Cardiac septum (tissue), 1 donor: ENCODE measurements at regions of chr15 and their contacts with region 1.

Region 1: DNA sequence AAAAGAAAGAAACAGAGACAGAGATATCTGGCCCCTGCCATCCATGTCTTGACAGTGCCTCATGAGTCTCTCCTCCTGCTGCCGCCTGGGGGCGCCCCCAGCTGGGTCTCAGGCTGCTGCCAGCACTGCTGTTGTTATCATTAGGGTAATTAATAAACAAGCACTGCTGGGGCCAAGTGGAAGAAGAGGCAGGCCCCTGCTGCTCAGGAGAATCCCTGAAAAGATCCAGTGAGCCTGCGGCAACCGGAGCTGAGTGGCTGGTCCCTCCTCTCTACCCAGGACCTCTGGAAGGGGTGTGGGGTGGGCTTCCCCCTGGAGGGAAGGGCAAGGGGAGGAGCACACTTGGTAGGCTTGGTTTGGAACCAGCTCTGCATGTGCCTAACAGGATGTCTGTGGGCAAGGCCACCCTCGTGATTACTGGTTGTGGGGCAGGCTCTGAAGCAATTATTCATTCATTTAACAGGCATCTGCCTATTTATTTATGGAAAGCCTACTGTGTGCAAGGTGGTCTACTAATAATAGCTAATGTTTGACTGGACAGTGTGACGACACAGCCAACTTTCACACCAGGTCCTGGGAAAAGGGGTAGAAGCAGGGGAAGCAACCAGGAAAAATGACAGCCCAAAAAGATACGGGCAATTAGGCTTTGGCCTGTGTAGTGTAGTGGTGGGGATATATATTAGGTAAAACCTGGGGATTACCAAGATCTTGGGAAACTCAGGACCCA is 1.2 kb upstream of the TYRO3 start:
- DNase-seq: no peak

Region 2: GRCh38 chr15:41180206-41180789 is 377.5 kb before region 1 on chr15:
- intact Hi-C with region 1: no loop called
- DNase-seq: no peak

Region 3: DNA sequence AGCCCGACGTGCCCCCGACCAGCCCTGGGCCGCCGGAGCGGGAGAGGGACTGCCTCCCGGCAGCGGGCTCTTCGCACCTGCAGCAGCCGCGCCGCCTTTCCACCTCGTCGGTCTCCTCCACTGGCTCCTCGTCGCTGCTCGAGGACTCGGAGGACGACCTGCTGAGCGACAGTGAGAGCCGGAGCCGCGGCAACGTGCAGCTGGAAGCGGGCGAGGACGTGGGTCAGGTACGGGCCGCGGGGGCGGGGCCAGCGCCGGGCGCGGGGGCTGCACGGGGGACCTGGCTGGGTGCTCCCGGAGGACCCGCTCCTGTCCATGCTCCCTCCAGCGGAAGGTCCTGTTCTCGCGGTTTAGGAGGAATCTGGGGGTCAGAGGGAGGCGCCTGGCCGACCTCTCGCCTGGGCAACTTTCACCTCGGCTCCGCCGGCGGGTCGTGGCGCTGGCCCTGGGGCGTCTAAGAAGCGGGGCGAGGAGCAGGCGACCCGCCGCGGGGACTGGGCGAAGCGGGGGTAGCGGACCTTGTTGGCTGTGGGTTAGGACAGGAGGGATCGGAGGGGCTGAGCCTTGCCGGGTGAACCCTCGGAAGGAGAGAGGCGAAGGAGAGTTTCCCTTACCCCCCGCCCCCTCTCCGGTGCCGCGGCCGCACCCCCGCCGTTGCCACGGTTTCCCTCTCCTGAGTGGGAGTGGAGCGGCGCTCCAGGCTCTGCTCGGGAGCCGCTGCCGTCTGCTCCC is 63.5 kb before region 1 on chr15:
- intact Hi-C with region 1: no loop called
- DNase-seq: no peak

Region 4: GRCh38 chr15:41585127-41586047 is 27.6 kb after region 1 on chr15:
- intact Hi-C with region 1: loop called (anchors 2 kb)
- DNase-seq: no peak

Region 5: DNA sequence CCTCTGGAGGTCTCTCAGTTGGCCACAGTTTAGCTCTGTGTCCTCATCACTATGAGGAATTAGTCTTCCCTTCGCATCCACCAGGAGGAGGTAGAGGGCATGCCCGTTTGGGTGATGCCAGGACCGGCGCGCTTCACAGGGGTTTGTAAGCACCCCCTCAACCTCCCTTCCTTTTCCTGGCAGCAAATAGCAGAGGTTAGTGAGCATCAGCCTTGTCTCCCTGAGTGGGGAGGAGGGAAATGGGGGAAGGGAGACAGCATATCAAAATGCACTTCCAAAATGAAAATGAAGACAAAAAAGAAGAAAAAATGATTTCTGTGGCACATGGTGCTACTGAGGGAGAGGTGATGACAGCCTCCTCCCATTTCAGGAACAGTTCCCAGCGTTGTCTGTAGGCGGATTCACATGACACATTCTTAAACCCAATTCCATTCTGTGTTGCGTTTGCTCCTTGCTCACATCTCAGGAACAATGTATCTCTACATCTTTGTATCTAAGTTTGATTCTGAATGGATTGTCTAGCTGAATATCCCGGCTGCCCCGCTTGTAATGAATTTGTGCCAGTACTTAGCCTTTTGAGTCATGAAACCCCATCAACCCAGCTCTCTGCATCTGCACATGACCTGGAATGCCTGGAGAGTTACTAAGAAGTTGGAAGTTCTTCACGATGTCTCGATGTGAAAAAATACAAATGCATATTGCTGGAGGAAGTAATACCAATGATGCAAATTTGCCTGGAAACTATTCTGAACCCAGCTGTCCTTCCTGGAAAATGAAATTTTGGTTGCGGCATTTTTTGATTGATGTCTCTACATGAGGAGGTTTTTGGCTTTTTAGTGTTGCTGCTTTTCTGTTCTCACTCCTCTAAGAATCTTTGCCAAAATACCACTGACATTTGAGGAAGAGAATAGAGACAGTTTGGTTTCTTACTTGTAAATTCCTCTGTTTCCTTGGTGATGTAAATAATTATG is 46.4 kb after region 1 on chr15:
- intact Hi-C with region 1: loop called (anchors 5 kb)
- DNase-seq: peak; percentile 78

Region 6: DNA sequence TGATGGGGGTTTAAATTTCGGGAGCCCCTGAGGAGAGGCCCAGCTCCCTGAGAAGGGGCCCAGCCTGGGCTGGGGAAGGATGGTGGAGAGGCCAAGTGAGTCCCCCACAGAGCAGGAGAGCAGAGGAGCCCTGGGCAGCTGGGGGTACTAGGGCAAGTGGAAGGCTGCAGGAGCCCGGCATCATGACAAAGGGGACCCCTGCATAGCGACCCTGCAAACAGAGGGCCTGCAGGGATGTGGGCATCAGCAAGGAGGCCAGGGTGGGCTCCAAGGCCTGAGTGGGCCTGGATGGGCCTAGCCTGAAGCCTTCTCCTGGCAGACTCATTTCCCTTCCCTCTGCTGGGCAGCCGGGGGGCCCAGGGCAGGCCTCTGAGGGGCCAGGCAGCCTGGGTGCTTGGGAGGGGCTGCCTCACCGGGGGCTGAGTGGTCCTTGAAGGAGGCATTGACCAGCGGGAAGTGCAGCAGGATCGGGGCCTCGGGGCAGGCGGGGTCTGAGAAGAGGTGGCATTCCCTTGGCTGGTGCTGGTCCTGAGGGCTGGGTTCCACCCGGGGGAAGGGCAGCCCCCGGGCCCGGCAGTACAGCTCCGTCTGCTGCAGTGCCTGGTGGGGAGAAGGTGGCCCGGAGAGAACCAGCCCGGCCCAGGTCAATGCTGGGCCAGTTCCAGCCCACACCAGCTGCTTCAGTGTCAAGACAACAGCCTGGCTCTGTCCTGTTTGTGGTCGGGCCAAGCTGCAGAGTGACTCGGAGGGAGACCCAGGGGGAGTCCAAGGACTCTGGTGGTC is 511.9 kb after region 1 on chr15:
- intact Hi-C with region 1: no loop called
- DNase-seq: peak; percentile 60